MCF 10A (cell line): ENCODE measurements at regions of chr2 and their contacts with region 1.

Region 1: DNA sequence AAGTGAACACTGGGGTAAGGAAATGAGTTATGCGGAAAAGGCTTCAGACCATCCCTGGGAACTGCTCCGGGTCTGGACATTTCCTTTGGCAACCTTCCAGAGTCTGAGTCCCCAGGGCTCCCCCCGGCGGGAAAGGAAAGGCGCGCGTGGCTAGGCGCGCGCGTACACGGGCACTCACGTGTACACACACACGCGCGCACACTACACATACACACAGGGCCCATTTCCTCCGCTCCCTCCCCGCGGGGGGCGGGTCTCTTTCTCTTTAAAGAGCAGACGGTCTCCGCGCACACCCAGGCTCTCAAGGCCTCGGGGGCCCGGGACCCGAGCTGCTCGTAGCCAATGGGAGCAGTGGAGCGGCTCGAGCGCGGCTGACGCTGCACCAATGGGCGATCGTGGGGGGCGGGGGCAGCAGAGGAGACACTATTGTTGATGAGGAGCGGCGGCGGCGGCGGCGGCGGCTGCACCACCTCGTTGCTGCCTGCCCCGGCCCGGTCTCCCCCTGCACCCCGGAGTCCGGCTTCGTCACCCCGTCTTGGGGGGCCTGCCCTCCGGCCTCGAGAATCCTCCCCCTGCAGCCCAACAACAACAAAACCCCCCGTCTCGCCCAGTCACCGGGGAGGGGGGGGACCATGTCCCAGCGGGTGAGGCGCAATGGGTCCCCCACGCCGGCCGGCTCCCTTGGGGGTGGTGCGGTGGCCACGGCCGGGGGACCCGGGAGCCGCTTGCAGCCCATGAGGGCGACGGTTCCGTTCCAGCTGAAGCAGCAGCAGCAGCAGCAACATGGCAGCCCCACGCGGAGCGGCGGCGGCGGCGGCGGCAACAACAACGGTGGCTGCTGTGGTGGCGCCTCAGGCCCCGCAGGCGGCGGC is at the start of gene FAM117B:
- DNase-seq: peak; percentile 97
- H3K4me3 Mint-ChIP-seq: peak within 1 kb of the TSS; percentile 95
- H3K27ac Mint-ChIP-seq: peak within 1 kb of the TSS; percentile 84
- H3K4me1 Mint-ChIP-seq: peaks cover 15% of the 10 kb centered on the region
- H3K27me3 Mint-ChIP-seq: no peaks in the 10 kb centered on the region
- CTCF ChIP-seq: no peak
- total RNA-seq, gene FAM117B: 2.4 and 2.5 TPM in 2 replicates

Region 2: GRCh38 chr2:202602285-202602684 is 32.5 kb before region 1 on chr2:
- CTCF ChIA-PET with region 1: interaction called, 4 read pairs
- POLR2A ChIA-PET with region 1: interaction called, 15 read pairs
- intact Hi-C with region 1: no loop called
- DNase-seq: no peak
- H3K4me3 Mint-ChIP-seq: no peak overlapping the region
- H3K27ac Mint-ChIP-seq: no peak overlapping the region
- H3K4me1 Mint-ChIP-seq: no peaks in the 10 kb centered on the region
- H3K27me3 Mint-ChIP-seq: no peaks in the 10 kb centered on the region
- CTCF ChIP-seq: no peak

Region 3: DNA sequence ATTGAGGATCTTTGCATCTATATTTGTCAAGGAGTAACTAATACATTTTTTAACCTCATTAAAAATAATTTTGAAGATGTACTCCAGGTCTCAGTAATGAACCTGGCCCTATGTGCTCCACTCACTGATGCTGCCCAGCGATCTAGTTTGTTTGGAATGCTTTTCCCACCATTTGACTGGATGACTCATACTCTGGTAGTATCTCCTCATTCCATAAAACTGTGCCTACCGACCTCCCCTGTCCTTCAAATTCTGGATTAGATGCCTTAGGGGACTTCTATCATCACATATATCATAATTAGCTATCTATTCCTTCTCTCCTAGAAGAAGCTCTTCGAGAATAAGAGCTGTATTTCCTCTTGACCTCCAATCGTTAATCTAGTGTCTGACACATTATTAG is 83.8 kb after region 1 on chr2:
- CTCF ChIA-PET with region 1: interaction called, 5 read pairs
- POLR2A ChIA-PET with region 1: interaction called, 16 read pairs
- intact Hi-C with region 1: no loop called
- DNase-seq: peak; percentile 49
- H3K4me3 Mint-ChIP-seq: no peak overlapping the region
- H3K27ac Mint-ChIP-seq: no peak overlapping the region
- H3K4me1 Mint-ChIP-seq: peaks cover 12% of the 10 kb centered on the region
- H3K27me3 Mint-ChIP-seq: no peaks in the 10 kb centered on the region
- CTCF ChIP-seq: no peak

Region 4: GRCh38 chr2:202808754-202809153 is 174.0 kb after region 1 on chr2:
- CTCF ChIA-PET with region 1: no interaction called
- POLR2A ChIA-PET with region 1: interaction called, 49 read pairs
- intact Hi-C with region 1: no loop called
- DNase-seq: peak; percentile 54
- H3K4me3 Mint-ChIP-seq: no peak overlapping the region
- H3K27ac Mint-ChIP-seq: peak overlapping the region; percentile 89
- H3K4me1 Mint-ChIP-seq: peaks cover 24% of the 10 kb centered on the region
- H3K27me3 Mint-ChIP-seq: no peaks in the 10 kb centered on the region
- CTCF ChIP-seq: no peak

Region 5: DNA sequence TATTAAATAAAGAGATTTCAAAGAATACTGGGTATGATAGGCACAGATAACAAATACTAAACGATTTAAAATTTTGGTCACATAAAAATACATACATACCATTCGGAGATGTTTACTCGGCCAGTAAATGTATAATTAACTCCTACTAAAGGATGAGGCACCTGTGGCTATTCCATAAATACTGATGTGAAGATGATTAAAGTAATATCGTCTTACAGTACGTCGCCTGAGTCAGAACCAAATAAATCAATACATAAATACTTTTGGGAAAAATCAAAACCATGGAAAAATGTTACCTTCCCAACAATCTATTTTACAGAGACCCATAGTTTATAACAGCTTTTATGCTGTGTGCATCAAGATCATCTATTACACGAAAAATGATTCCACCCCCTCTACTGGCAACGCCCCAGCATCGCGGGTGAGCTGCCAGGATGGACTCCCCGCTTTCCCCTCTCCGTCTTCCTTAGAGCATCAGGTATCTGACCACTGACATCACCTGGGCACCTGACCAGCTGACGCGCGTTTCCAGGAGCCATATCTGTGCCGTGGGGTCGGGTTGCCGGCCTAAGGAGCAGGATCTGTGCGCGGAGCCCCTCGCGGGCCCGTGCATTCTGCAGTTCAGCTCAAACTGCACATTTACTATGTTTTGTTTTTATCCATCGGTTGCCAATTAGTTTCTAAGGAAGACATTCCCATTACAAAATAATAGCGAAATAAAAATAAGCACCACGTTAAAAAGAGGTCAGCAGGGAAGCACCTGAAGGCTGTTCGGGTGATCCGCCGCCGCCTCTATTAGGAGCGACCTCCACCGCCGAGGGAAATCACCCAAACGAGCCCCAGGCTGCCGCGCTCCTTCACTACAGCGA is 235.9 kb after region 1 on chr2:
- CTCF ChIA-PET with region 1: no interaction called
- POLR2A ChIA-PET with region 1: interaction called, 27 read pairs
- intact Hi-C with region 1: loop called (anchors 2 kb)
- DNase-seq: peak; percentile 86
- H3K4me3 Mint-ChIP-seq: peak overlapping the region; percentile 72
- H3K27ac Mint-ChIP-seq: peak overlapping the region; percentile 57
- H3K4me1 Mint-ChIP-seq: peaks cover 5% of the 10 kb centered on the region
- H3K27me3 Mint-ChIP-seq: no peaks in the 10 kb centered on the region
- CTCF ChIP-seq: peak; percentile 52

Region 6: GRCh38 chr2:202911512-202912341 is 276.9 kb after region 1 on chr2 and contains the starts of genes CARF and WDR12:
- CTCF ChIA-PET with region 1: no interaction called
- POLR2A ChIA-PET with region 1: interaction called, 40 read pairs
- intact Hi-C with region 1: no loop called
- DNase-seq: peak; percentile 95
- H3K4me3 Mint-ChIP-seq: peak within 1 kb of the TSS; percentile 96
- H3K27ac Mint-ChIP-seq: peak within 1 kb of the TSS; percentile 87
- H3K4me1 Mint-ChIP-seq: peaks cover 18% of the 10 kb centered on the region
- H3K27me3 Mint-ChIP-seq: no peaks in the 10 kb centered on the region
- CTCF ChIP-seq: no peak
- total RNA-seq, gene CARF: 6.8 and 8.2 TPM in 2 replicates
- total RNA-seq, gene WDR12: 141 and 146 TPM in 2 replicates